ENCODE measurements at regions of chr22 and their contacts with region 1.

Region 1: GRCh38 chr22:20205964-20206708 is 55.3 kb upstream of the CCDC188 start:
- DNase-seq: no peak
- ATAC-seq: peak; percentile 74

Region 2: GRCh38 chr22:19916941-19917340 is 289.2 kb before region 1 on chr22:
- intact Hi-C with region 1: no loop called
- DNase-seq: no peak
- ATAC-seq: no peak

Region 3: GRCh38 chr22:19928207-19928606 is 277.9 kb before region 1 on chr22:
- intact Hi-C with region 1: no loop called
- DNase-seq: no peak
- ATAC-seq: no peak

Region 4: DNA sequence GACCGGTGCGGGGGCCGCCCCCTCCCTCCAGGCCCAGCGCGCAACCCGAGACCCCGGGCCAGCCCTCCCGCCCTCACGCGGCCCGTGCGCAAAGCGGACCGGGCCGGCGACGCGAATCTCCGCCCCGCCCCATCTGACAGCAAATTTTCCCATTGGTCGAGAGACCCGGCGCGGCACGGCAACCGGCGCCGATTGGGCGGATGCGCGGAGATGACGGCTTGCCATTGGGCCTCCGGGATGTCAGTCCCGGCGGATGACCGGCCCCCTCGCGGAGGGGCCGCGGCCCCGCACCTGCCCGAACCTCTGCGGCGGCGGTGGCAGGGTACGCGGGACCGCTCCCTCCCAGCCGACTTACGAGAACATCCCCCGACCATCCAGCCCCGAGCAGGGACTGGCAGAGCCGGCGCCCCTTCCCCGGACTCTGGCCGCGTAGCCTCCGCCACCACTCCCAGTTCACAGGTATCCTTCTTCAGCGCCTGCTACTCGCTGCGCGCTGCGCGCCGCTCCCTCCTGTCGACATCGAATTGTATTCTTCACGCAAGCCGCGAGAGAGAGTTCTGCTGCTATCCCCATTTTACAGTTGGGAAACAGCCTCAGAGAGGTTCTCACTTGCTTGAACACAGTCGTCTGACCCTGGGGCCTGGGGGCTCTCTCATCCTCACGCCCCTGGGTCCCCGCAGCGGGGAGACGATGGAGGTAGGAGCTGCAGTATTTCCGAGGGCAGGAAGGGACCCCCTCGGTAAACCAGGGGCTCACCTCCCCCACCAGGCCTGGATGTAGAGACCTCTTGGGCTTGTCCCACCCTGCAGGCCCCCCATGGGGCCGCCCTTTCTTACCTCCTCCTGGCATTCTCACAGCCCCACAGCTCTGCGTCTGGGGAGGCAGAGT is 189.2 kb before region 1 on chr22 and contains the start of gene ARVCF:
- intact Hi-C with region 1: no loop called
- DNase-seq: peak; percentile 95
- ATAC-seq: peak; percentile 67
- total RNA-seq, gene ARVCF: 30.5 TPM

Region 5: GRCh38 chr22:20249797-20250354 is 43.7 kb after region 1 on chr22:
- intact Hi-C with region 1: loop called (anchors 5 kb)
- DNase-seq: no peak
- ATAC-seq: peak; percentile 62

Region 6: DNA sequence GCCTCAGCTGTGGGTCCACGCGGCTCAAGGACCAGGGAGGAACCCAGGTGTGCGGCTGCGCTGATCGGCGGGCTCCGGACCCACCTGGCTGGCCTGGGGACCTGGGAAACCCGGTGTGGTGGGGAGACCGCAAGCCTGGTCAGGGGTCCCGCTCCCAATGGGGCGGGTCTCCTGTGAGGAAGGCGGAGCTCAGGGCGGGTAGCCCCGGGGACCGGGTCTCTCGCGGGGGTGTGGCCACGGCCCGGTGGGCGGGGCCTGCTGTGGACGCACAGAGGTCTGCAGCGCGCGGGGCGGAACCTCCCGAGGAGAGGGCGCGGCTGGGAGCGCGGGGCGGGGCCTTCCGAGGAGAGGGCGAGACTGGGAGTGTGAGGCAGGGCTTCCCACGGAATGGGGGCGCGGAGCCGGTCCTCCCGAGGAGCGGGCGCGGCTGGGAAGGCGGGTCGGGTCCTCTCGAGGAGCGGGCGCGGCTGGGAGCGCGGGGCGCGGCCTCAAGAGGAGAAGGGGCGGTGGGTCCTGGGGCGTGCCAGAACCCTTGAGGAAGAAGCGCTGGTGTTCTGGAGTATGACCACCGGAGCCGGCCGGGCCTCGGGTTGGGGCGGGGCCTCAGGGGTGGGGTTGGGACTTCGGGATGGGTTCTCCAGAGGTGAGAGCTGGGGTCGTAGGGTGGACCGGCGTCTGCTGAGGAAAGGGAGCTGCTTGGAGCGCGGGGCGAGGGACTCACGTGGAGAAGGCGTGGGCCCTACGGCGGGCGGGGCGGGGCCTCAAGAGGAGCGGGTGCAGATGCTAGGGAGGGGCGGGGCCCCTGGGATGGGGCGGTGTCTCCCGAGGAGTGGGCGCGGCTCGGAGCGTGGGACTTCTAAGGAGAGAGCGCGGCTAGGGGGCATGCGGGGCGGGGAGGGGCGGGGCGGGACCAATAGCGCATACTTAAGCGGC is 92.9 kb after region 1 on chr22:
- intact Hi-C with region 1: no loop called
- DNase-seq: peak; percentile 93
- ATAC-seq: peak; percentile 94